A673 (cell line): ENCODE measurements at regions of chr14 and their contacts with region 1.

Region 1: DNA sequence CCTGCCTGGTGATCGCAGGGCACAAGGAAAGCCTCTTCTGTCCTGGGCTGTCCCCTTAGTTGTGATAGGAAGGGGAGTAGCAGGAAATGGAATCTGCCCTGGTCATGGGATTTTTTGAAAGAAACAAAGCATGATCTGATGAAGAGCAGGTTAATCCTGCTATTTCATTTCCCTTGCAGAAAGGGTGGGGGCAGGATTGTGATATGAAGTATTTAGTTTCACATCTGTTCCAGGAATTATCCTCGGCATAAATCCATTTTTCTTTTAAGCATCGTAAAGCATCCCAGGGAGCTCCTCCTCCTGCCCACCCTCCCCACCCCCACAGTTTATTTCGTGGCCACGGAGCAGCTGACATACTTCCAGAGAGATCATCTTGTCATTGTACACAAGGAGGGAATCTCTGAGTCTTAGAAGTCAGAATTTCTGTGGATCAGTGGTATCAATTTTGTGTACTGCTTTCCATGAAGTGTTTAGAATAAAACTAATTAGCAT is 53.1 kb downstream of the TGFB3 start:
- DNase-seq: peak; percentile 19
- H3K4me3 ChIP-seq: no peak overlapping the region
- H3K27ac ChIP-seq: no peak overlapping the region
- H3K4me1 ChIP-seq: peaks cover 6% of the 10 kb centered on the region
- H3K27me3 ChIP-seq: no peaks in the 10 kb centered on the region
- CTCF ChIP-seq: no peak

Region 2: DNA sequence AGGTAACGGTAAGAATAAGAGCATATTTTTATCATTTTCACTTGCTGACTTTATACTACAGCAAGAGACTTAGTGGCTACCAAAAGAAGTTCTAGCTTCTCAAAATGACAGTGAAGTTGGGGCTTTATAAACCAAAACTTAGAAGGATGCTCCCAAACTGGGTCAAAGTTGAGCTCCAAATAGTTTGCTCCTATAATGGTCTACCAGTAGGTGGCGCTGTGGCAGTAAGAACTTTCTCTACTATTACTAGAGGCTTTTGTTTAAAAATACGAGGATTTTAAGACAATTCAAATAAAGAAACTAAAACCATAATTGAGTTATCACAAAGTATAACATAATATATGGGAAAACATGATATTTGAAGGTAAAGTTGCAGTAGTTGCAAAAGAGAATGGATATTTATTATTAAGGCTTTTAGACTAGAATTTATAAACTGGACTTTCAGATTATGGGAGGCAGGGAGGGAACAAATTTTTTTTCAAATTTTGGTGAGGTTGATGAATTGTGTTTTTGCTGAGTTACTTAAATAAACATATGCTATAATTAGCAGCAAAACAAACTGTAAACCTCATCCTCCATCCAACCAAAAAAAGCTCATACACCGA is 22.0 kb before region 1 on chr14:
- CTCF ChIA-PET with region 1: interaction called, 10 read pairs
- POLR2A ChIA-PET with region 1: no interaction called
- intact Hi-C with region 1: no loop called
- DNase-seq: peak; percentile 64
- H3K4me3 ChIP-seq: no peak overlapping the region
- H3K27ac ChIP-seq: no peak overlapping the region
- H3K4me1 ChIP-seq: peaks cover 10% of the 10 kb centered on the region
- H3K27me3 ChIP-seq: no peaks in the 10 kb centered on the region
- CTCF ChIP-seq: peak; percentile 93